ENCODE measurements at regions of chr22 and their contacts with region 1.

Region 1: DNA sequence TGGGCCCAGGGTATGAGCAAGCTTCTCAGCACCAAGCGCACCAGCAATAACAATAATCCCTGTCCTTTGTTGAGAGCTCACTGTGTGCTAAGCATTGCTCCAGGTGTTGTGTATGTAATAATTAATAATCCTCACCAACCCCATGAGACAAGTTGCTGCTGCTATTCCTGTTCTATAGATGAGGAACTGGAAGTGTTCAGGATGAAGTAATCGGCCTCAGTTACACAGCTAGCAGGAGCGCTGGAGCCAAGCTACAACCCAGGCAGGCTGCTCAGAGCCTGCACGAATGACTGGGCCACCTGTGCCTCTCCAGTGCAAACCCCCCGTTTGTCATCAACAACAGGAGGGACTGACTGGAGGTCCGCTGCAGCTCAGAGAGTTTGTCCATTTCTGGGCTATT is 35.2 kb upstream of the CECR2 start:
- DNase-seq: no peak
- ATAC-seq: no peak
- H3K4me3 ChIP-seq: no peak overlapping the region
- H3K27ac ChIP-seq: no peak overlapping the region
- H3K4me1 ChIP-seq: no peaks in the 10 kb centered on the region
- H3K27me3 ChIP-seq: no peaks in the 10 kb centered on the region
- CTCF ChIP-seq: no peak

Region 2: GRCh38 chr22:17281440-17281841 is 52.6 kb before region 1 on chr22:
- CTCF ChIA-PET with region 1: interaction called, 10 read pairs
- POLR2A ChIA-PET with region 1: no interaction called
- in situ Hi-C with region 1: no loop called
- intact Hi-C with region 1: no loop called
- DNase-seq: no peak
- ATAC-seq: no peak
- H3K4me3 ChIP-seq: no peak overlapping the region
- H3K27ac ChIP-seq: no peak overlapping the region
- H3K4me1 ChIP-seq: no peaks in the 10 kb centered on the region
- H3K27me3 ChIP-seq: no peaks in the 10 kb centered on the region
- CTCF ChIP-seq: no peak

Region 3: DNA sequence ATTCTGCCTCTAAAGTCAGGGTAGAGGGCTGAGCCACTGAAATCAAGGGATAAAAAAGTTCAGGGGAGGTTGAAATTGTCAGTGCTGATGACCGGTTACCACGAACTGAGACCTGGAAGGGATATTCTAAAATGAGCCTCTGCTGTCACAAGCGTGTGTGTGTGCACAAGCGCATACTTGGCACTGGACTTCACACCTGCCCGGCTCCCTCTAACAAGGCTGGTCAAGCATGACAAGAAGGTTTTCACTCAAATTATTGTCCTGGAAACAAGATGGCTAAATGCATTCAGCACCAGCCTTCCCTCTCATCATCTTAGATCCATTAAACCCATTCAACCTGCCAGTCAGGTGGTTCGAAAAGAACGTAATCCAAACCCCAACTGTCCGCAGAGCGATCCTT is 19.6 kb before region 1 on chr22:
- CTCF ChIA-PET with region 1: interaction called, 10 read pairs
- POLR2A ChIA-PET with region 1: no interaction called
- in situ Hi-C with region 1: no loop called
- intact Hi-C with region 1: no loop called
- DNase-seq: no peak
- ATAC-seq: no peak
- H3K4me3 ChIP-seq: no peak overlapping the region
- H3K27ac ChIP-seq: no peak overlapping the region
- H3K4me1 ChIP-seq: no peaks in the 10 kb centered on the region
- H3K27me3 ChIP-seq: no peaks in the 10 kb centered on the region
- CTCF ChIP-seq: no peak

Region 4: GRCh38 chr22:17381237-17381914 is 47.3 kb after region 1 on chr22:
- CTCF ChIA-PET with region 1: no interaction called
- POLR2A ChIA-PET with region 1: no interaction called
- in situ Hi-C with region 1: no loop called
- intact Hi-C with region 1: no loop called
- DNase-seq: no peak
- ATAC-seq: no peak
- H3K4me3 ChIP-seq: no peak overlapping the region
- H3K27ac ChIP-seq: no peak overlapping the region
- H3K4me1 ChIP-seq: no peaks in the 10 kb centered on the region
- H3K27me3 ChIP-seq: no peaks in the 10 kb centered on the region
- CTCF ChIP-seq: no peak